Tibial artery (tissue), 4 donors: ENCODE measurements at regions of chr2 and their contacts with region 1.

Region 1: GRCh38 chr2:176140513-176141317 is 10.6 kb upstream of the HOXD4 start:
- DNase-seq: peak; percentile 51 to 85
- H3K4me3 ChIP-seq: peak overlapping the region; percentile 48 to 57
- H3K27ac ChIP-seq: peak overlapping the region; percentile 57 to 60
- H3K4me1 ChIP-seq: peaks cover 0 to 34% (median 19%) of the 10 kb centered on the region in 4 donors
- H3K27me3 ChIP-seq: peaks cover 0 to 19% of the 10 kb centered on the region in 2 donors
- CTCF ChIP-seq: peak; percentile 94 to 95

Region 2: GRCh38 chr2:176079831-176080539 is 60.7 kb before region 1 on chr2:
- intact Hi-C with region 1: no loop called
- DNase-seq: no peak
- H3K4me3 ChIP-seq: peak overlapping the region; percentile 6 to 35
- H3K27ac ChIP-seq: no peak overlapping the region
- H3K4me1 ChIP-seq: peaks cover 0 to 42% (median 24%) of the 10 kb centered on the region in 4 donors
- H3K27me3 ChIP-seq: peaks cover 29 to 99% of the 10 kb centered on the region in 2 donors
- CTCF ChIP-seq: peak; percentile 46 to 48

Region 3: DNA sequence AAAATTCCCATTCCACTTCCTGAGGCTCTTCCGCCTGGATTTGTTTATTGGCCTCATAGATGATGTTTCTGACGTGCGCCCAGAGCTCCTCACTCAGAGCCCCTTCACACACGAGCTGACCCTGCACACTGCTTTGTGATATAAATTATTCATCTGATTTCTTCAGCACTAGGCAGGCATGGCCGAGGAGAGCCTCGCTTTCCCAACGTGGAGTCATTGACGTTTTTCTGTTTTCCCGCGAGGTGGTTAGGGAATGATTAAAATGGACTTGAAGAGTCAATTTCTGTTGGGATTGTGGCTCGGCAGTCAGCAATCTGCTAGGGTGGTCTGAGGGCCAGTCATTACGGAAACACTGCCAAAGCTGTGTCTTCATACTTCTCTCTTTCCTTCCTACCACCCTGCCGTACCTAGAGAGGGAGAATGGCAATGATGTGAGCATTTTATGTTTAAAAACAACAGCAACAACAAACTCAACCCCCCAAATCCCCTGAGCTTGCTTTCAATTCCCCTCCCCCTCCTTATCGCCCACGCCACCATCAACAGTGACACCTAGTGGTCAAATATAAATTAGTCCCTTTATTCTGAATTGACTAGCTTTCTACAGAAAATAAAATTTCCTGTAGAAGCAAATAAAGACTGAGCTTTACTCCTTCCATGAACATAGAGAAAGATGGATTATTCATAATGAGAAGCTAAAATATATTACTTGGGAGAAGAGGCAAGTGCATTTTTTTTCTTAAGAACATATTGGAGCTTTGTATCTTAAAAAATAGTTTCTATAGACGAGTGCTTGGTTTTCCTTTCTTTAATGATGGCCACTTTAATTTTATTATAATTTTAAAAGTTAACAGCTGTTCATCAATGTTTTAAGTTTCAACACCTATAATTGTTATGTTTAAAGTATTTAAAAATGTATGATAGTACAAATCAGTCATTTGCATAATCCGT is 413.7 kb after region 1 on chr2:
- intact Hi-C with region 1: loop called (anchors 2 kb)
- DNase-seq: no peak
- H3K4me3 ChIP-seq: peak overlapping the region; percentile 43 to 52
- H3K27ac ChIP-seq: peak overlapping the region; percentile 39 to 58
- H3K4me1 ChIP-seq: peaks cover 0 to 18% (median 10%) of the 10 kb centered on the region in 4 donors
- H3K27me3 ChIP-seq: peaks cover 0 to 10% of the 10 kb centered on the region in 2 donors
- CTCF ChIP-seq: peak; percentile 78

Region 4: GRCh38 chr2:177474998-177475397 is 1334.3 kb after region 1 on chr2:
- intact Hi-C with region 1: no loop called
- DNase-seq: no peak
- H3K4me3 ChIP-seq: no peak overlapping the region
- H3K27ac ChIP-seq: no peak overlapping the region
- H3K4me1 ChIP-seq: peaks cover 0 to 6% (median 0%) of the 10 kb centered on the region in 4 donors
- H3K27me3 ChIP-seq: no peaks in the 10 kb centered on the region
- CTCF ChIP-seq: no peak